Endothelial cell of umbilical vein (primary cell): ENCODE measurements at regions of chr2 and their contacts with region 1.

Region 1: DNA sequence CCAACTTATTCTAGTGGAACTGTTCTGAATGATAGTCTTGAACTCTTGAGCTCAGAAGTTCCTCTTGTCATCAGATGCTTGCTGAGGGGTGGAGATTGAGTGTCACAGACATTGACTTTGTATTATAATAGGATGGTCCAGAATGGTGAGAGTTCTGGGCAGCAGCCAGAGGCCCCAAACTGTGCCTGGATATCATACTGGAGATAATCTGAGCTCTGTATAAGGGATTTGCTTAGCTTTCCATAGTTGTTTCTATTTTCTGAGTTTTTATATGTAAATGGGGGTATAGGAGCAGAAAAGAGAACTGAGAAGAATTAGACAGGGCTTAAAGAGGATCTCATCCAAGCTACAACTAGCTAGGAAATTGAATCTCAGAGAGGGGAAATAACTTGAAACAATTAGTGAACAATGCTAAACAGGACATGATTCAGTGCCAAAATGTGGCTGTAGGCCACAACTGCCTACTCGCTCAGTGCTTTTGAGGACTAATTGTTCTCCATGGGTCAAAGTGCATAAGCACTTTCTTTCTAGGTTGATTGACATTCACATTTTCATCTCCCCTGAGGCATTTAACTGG is 10.1 kb upstream of the LCLAT1 start:
- DNase-seq: peak; percentile 92
- H3K4me3 ChIP-seq: no peak overlapping the region
- H3K27ac ChIP-seq: peak overlapping the region; percentile 51
- H3K4me1 ChIP-seq: peaks cover 17% of the 10 kb centered on the region
- H3K27me3 ChIP-seq: no peaks in the 10 kb centered on the region
- CTCF ChIP-seq: no peak
- POLR2A ChIP-seq: no peak

Region 2: GRCh38 chr2:30231212-30231995 is 205.5 kb before region 1 on chr2 and contains the start of gene LBH:
- CTCF ChIA-PET with region 1: no interaction called
- POLR2A ChIA-PET with region 1: no interaction called
- dilution Hi-C with region 1: no loop called
- intact Hi-C with region 1: loop called (anchors 2 kb)
- DNase-seq: peak; percentile 72
- H3K4me3 ChIP-seq: peak within 1 kb of the TSS; percentile 51 to 58 (median 53)
- H3K27ac ChIP-seq: no peak within 1 kb of the TSS
- H3K4me1 ChIP-seq: peaks cover 9% of the 10 kb centered on the region
- H3K27me3 ChIP-seq: peaks cover 21 to 22% of the 10 kb centered on the region in 2 experiments
- CTCF ChIP-seq: peak in 1 of 2 donors; percentile 3
- POLR2A ChIP-seq: peak; percentile 86
- total RNA-seq, gene LBH: 2.9 and 5.5 TPM in 2 replicates

Region 3: DNA sequence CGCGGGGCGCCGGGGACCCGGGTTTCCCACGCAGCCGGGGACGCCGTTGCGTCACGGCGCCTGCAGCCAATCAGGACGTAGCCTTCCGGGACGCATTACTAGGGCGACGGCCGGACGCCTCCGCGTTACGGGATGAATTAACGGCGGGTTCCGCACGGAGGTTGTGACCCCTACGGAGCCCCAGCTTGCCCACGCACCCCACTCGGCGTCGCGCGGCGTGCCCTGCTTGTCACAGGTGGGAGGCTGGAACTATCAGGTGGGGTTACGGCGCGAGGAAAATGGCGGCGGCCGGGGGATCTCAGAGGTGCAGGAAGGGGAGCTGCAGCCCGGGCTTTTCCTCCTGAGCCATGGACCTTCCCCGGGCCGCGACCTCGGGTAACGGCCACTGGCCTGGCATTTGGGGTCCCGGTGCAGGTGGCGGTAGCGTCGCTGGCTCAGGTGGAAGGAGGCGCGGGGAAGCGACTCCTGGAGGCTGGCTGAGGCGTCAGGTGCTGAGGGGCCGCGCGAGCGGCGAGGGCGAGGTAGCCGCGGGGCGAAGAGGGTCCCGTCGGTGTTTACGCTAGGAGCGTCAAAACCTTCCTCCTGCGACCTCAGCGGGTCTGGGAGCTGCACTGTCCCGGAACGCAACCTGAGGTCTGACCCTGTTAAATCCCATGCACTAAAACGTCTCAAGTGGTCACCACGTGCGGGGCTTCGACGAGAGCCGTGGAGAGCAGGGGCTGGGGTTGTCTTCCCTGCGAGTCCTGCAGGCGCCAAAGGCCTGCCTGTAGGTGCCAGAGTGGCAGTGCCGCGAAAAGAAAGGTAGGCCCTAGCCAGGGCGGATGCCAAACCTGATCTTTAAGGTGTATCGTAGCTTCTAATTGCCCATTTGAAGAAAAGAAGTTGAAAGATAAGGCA is 10.4 kb after region 1 on chr2 and contains the start of gene LCLAT1:
- CTCF ChIA-PET with region 1: interaction called, 12 read pairs
- POLR2A ChIA-PET with region 1: no interaction called
- dilution Hi-C with region 1: no loop called
- intact Hi-C with region 1: loop called (anchors 1 kb)
- DNase-seq: peak; percentile 79
- H3K4me3 ChIP-seq: peak within 1 kb of the TSS; percentile 89 to 91 (median 90)
- H3K27ac ChIP-seq: peak within 1 kb of the TSS; percentile 83
- H3K4me1 ChIP-seq: peaks cover 13% of the 10 kb centered on the region
- H3K27me3 ChIP-seq: no peaks in the 10 kb centered on the region
- CTCF ChIP-seq: no peak
- POLR2A ChIP-seq: peak; percentile 18
- total RNA-seq, gene LCLAT1: 17.1 and 20.8 TPM in 2 replicates